ENCODE measurements at regions of chr3 and their contacts with region 1.

Region 1: DNA sequence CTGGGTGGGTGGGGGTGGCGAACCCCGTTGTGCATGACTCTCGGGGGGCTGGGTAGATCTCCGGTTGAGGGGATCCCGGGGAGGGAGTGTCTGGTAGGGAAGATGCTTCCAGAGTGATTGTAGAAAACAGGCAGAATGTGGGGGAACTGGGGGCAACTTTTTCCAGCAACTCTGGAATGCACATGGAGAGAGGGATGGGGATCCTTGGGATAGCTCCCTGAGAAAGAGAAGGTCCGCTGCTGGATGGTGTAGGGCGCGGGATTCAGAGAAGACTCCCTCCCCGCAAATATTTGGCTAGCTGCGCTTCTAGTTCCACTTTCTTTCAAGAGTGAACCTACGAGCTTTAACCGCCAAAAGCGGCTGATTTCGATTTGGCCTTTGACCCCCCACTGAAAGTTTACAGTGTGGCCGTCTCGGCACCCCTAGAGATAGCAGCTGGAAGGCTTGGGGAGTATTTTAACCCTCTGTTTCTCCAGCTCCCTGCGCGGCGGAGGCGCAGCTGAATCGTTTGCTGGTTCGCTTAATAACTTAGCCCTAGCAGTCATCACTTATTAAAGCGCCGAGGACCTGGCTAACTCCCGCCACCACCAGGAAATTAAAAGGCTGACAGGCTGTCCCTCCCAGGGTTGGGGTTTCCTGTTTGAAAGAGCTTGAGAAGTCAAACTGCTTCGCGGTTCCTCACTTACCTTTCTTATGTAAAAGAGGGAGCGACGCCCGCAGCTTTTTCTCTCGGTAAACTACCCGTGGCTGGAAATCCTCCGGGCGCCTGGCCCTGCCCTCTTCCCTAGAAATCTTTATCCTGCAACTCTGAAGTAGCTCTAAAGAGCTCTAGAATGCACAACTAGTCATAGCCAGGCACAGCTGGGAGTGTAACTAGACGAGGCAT is 1.2 kb downstream of the PHLDB2 start:
- DNase-seq: no peak
- H3K4me3 ChIP-seq: peak overlapping the region; percentile 78
- H3K27ac ChIP-seq: peak overlapping the region; percentile 95
- H3K27me3 ChIP-seq: no peaks in the 10 kb centered on the region
- CTCF ChIP-seq: peak; percentile 61

Region 2: GRCh38 chr3:111531446-111531845 is 328.8 kb before region 1 on chr3:
- CTCF ChIA-PET with region 1: no interaction called
- POLR2A ChIA-PET with region 1: no interaction called
- DNase-seq: no peak
- H3K4me3 ChIP-seq: no peak overlapping the region
- H3K27ac ChIP-seq: no peak overlapping the region
- H3K27me3 ChIP-seq: no peaks in the 10 kb centered on the region
- CTCF ChIP-seq: no peak

Region 3: DNA sequence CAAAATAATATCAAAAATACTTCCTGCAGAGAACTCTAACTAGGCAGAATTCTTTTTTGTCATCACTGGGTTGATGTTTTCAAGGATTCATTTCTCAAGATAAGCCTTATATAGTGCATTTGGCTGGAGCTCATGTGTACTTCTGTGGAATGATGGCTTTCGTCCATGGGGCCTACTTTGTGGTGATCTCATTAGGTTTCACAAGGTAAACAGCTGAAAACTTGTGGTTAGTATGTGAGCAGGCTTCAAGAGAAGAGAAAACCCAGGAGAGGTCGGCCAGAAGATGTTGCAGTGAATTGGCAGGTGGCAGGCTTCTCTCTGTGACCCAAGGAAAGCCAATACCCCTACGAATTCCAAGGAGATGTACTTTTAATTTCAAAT is 122.5 kb before region 1 on chr3:
- CTCF ChIA-PET with region 1: interaction called, 10 read pairs
- POLR2A ChIA-PET with region 1: interaction called, 4 read pairs
- DNase-seq: peak; percentile 92
- H3K4me3 ChIP-seq: no peak overlapping the region
- H3K27ac ChIP-seq: no peak overlapping the region
- H3K27me3 ChIP-seq: peaks cover 7% of the 10 kb centered on the region
- CTCF ChIP-seq: no peak

Region 4: GRCh38 chr3:111803123-111803593 is 57.1 kb before region 1 on chr3:
- CTCF ChIA-PET with region 1: interaction called, 7 read pairs
- POLR2A ChIA-PET with region 1: interaction called, 14 read pairs
- DNase-seq: peak; percentile 90
- H3K4me3 ChIP-seq: no peak overlapping the region
- H3K27ac ChIP-seq: peak overlapping the region; percentile 75
- H3K27me3 ChIP-seq: no peaks in the 10 kb centered on the region
- CTCF ChIP-seq: no peak

Measured in AG04450 (cell line).